Activated naive CD4-positive, alpha-beta T cell treated with anti-CD3 and anti-CD28 coated beads for 36 hours (primary cell): ENCODE measurements at regions of chr1 and their contacts with region 1.

Region 1: DNA sequence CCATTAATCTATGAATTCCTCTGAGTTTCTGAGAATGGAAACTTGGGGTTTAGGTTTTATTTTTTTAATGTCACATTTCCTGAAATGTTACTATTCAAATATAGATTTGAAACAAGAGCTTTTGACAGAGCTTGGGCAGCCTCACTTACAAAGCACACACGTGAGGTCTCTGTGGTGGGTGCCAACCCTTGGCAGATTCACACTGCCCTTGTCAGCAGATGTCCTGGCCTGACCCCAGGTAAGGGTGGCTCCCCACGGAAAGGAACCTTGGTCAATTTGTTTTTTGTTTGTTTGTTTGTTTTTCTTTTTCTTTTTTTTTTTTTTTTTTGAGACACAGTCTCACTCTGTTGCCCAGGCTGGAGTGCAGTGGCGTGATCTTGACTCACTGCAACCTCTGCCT is 53.5 kb downstream of the FAAP20 start:
- DNase-seq: no peak
- H3K4me3 Mint-ChIP-seq: no peak overlapping the region
- H3K27ac Mint-ChIP-seq: no peak overlapping the region
- H3K4me1 Mint-ChIP-seq: peaks cover 7% of the 10 kb centered on the region
- H3K27me3 Mint-ChIP-seq: no peaks in the 10 kb centered on the region

Region 2: DNA sequence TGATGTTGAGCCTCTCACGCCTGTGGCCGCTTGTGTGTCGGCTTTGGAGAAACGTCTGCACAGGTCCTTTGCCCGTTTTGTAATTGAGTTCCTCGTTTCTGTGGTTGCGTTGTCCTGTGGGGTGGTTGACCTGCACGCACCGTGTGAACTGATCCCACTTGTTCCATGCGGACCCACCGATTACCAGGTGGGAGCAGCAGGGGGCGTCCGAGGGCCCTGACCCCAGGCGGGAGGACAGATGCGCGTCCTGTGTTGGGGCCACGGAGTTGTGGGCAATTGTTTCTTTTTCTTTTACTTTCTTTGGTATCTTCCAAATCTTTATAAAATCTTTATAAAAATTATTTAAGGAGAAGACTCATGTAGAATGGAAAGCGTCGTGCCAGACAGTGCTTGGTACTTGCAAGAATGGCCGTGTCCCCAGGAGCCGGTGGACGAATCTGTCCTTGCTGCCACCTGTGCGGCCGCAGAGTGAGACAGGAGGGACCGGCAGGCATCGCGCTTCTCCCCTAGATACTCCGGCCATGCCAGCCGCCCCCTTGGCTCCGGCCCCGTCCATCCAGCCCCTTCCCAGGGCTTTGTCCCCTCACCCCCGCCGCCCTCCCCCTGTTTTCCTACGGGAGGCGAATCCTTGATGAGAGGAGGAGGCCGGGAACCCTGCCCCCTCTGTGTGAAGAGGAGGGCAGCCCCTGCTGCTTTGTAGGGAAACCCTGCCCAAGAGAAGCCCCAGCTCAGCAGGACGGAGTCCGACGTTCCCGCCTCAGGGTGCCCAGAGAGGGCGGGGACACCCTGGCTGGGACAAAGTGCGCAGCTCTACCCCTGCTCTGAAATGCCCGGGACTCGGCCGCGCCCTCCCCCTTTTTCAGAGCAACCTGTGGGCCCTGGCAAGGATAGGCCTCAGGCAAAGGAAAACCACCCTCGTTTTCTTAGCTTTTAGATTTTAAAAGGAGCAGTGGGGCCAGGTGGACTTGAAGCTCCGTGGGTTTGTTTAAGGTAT is 49.1 kb before region 1 on chr1:
- CTCF ChIA-PET with region 1: interaction called, 11 read pairs
- intact Hi-C with region 1: loop called (anchors 1 kb)
- DNase-seq: peak; percentile 67
- H3K4me3 Mint-ChIP-seq: no peak overlapping the region
- H3K27ac Mint-ChIP-seq: no peak overlapping the region
- H3K4me1 Mint-ChIP-seq: peaks cover 3% of the 10 kb centered on the region
- H3K27me3 Mint-ChIP-seq: no peaks in the 10 kb centered on the region